H1 (cell line): ENCODE measurements at regions of chr11 and their contacts with region 1.

Region 1: DNA sequence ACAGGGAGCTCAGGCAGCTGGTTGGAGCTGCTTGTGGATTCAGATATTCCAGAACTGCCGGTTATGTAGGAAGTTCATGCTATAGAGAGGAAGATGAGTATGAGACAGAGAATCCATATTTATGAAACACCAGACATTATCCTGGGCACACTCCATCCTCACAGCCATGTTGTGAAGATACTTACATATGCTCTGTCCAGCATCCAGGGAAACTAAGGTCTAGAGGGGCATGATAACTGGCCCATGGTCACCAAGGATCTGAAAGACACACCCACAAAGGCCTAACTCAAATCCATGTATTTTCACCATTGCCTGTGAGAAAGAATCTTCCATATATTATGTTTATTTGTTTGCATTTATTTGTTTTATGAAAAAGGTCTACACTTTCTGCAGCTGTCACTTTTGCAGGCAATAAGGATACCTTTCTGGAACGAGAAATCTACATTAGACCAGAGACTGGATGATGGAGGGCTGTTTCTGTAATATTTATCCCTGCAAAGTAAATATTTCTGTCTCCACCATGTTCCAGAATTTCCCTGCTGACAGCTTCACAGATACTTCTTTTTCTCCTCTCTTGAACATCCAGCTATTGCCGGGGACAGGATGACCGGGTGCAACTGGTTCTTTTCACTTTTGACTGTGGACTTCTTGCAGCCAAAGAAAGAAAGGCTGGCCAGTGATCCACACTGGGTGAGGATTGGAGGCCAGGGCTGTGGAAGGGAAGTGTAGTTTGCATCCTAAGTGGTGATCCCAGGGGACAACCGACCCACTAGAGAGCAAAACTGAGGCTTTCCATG is 145.9 kb upstream of the NAV2 start:
- DNase-seq: no peak
- H3K4me3 ChIP-seq: no peak overlapping the region
- H3K27ac ChIP-seq: no peak overlapping the region
- H3K4me1 ChIP-seq: no peaks in the 10 kb centered on the region
- H3K27me3 ChIP-seq: no peaks in the 10 kb centered on the region; a peak in 1 of 7 replicates
- CTCF ChIP-seq: no peak
- EP300 ChIP-seq: no peak
- POLR2A ChIP-seq: no peak
- RAD21 ChIP-seq: no peak

Region 2: GRCh38 chr11:19428206-19429002 is 138.4 kb before region 1 on chr11:
- CTCF ChIA-PET with region 1: no interaction called
- POLR2A ChIA-PET with region 1: no interaction called
- DNase-seq: no peak
- H3K4me3 ChIP-seq: no peak overlapping the region
- H3K27ac ChIP-seq: no peak overlapping the region
- H3K4me1 ChIP-seq: peaks cover 0 to 16% (median 5%) of the 10 kb centered on the region in 4 experiments; a peak in 3 of 7 replicates
- H3K27me3 ChIP-seq: 0 out of 7 replicates have a peak, but pooled peaks cover 0 to 2% (median 0%) of the 10 kb centered on the region in 4 experiments
- CTCF ChIP-seq: peak in 2 of 3 experiments; percentile 9 to 28; a peak in 2 of 4 replicates
- EP300 ChIP-seq: no peak
- POLR2A ChIP-seq: no peak
- RAD21 ChIP-seq: no peak; a peak in 1 of 4 replicates

Region 3: DNA sequence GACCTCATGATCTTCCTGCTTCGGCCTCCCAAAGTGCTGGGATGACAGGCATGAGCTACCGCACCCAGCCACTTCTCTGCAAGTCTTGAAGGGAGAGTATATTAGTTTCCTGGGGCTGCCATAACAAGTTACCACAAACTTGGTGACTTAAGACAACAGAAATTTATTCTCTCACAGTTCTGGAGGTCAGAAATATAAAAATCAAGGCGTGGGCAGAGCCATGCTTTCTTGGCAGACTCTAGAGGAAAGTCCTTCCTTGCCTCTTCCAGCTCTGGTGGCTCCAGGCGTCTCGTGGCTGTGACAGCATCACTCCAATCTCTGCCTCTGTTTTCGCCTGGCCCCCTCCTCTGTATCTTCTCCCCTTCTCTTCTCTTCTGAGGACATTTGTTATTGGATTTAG is 35.6 kb after region 1 on chr11:
- CTCF ChIA-PET with region 1: interaction called, 10 read pairs
- POLR2A ChIA-PET with region 1: no interaction called
- DNase-seq: no peak
- H3K4me3 ChIP-seq: no peak overlapping the region
- H3K27ac ChIP-seq: no peak overlapping the region
- H3K4me1 ChIP-seq: peaks cover 0 to 7% (median 2%) of the 10 kb centered on the region in 4 experiments; a peak in 3 of 7 replicates
- H3K27me3 ChIP-seq: no peaks in the 10 kb centered on the region
- CTCF ChIP-seq: no peak
- EP300 ChIP-seq: no peak
- POLR2A ChIP-seq: no peak
- RAD21 ChIP-seq: no peak

Region 4: DNA sequence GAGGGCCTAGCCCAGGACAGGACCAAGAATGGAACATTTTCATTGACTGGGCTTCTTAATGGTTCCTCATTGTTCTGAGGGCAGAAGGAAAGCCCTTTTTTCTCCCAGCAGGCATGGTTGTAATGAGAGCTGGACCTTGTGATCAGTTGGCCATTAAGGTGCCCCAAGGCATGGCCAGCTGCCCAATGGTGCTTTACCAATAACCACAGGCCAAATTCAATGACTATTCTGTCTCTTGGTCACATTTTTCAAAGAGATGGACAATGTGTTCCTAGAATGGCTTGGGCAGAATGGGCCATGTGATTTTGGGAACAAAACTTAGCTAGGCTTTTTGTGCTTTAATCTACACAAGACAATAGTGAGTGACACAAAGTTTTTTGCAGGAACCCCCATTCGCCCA is 153.2 kb after region 1 on chr11:
- CTCF ChIA-PET with region 1: interaction called, 10 read pairs
- POLR2A ChIA-PET with region 1: no interaction called
- DNase-seq: no peak
- H3K4me3 ChIP-seq: no peak overlapping the region
- H3K27ac ChIP-seq: no peak overlapping the region
- H3K4me1 ChIP-seq: 0 out of 7 replicates have a peak, but pooled peaks cover 0 to under 1% (median 0%) of the 10 kb centered on the region in 4 experiments
- H3K27me3 ChIP-seq: peaks cover 0 to 10% (median 6%) of the 10 kb centered on the region in 4 experiments; a peak in 6 of 7 replicates
- CTCF ChIP-seq: no peak
- EP300 ChIP-seq: no peak
- POLR2A ChIP-seq: no peak
- RAD21 ChIP-seq: no peak